Ascending aorta (tissue), 2 donors: ENCODE measurements at regions of chr12 and their contacts with region 1.

Region 1: DNA sequence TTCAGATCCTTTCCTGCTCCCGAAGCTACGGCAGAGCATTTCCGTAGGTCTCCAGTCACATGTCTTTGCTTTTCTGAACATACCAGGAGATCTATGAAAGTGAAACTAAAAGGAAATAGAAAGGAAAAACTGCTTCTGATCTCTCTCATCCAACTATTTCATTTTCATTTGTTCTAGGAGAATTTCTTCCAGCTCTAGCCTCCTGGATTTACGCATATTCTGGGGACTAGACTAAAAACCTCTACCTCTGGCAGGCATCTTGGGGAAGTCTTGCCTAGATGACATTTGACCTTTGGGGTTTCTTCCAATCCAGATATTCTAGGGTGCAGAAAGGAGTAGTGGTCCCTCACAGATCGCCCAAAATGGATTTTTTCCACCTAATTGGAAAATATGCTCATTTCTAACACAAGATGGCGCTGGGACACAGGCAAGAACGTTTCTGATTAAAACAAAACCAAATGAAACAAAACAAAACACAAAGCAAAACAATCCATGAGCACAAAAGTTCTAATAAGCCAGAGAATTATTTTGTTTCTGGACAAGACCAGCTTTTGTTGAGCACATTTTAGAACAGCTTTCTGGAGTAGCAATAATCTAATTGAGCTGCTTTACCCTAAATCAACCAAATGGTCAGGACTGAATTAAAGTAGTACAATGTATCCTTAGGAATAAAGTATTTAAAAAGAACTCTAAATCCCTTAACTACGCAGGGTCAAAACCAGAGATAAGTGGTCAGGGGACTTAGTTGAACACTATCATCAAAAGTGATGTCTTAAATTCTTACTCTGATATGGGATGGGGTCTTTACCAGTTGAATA is 12.3 kb upstream of the PARP11 start:
- DNase-seq: peak in 1 of 2 donors; percentile 67
- H3K4me3 ChIP-seq: peak overlapping the region; percentile 45 to 58
- H3K27ac ChIP-seq: peak overlapping the region; percentile 71 to 81
- H3K4me1 ChIP-seq: peaks cover 0 to 2% of the 10 kb centered on the region in 2 donors
- H3K27me3 ChIP-seq: no peaks in the 10 kb centered on the region
- CTCF ChIP-seq: peak; percentile 77 to 86 (median 80)

Region 2: DNA sequence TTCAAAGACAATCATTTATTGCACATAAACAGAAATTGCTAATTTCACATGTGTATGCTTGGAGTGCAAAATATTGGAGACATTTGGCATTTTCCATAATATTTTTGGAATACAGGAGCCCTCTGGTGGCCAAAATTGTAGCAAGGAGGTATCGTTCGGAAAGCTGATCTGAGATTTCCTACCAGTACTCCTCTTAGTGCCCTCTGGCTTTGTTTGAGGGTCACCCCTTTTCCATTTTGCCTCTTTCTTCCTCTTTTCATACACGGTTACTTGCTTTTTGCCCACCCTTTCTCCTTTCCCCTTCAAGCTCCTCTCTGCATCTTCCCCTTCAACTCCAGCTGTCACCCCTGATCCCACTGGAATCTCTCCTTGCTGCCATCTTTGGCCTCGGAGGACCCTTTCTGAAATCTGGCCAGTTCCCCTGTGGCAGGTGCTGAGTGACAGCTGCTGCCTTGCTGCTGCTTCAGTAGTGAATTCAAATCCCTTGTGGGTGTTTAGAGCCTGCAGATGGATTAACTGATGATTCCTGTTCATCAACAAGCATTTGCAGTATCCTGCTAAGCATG is 152.3 kb after region 1 on chr12:
- intact Hi-C with region 1: loop called (anchors 1 kb)
- DNase-seq: no peak
- H3K4me3 ChIP-seq: no peak overlapping the region
- H3K27ac ChIP-seq: no peak overlapping the region
- H3K4me1 ChIP-seq: no peaks in the 10 kb centered on the region
- H3K27me3 ChIP-seq: no peaks in the 10 kb centered on the region
- CTCF ChIP-seq: peak; percentile 59 to 77 (median 63)